ENCODE measurements at regions of chr4 and their contacts with region 1.

Region 1: GRCh38 chr4:183256756-183257385 is 63.2 kb downstream of the CLDN22 start:
- DNase-seq: peak; percentile 54
- H3K27ac ChIP-seq: no peak overlapping the region
- CTCF ChIP-seq: peak; percentile 77

Region 2: DNA sequence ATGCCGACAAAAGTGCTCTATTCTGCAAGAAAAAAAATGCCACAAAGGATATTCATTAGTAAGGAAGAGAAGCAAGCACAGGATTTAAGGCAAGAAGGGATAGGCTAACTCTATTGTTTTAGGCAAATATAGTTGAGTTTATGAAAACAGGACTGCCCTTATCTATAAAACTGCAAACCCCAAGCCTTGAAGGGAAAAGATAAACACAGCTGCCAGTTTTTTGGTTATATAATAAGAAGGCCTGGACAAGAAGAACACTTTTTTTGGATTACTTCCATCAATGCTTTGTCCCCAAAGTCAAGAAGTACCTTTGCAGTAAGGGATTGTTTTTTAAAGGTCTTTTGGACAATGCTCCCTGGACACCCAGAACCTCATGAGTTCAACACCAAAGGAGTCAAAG is 203.2 kb before region 1 on chr4:
- CTCF ChIA-PET with region 1: no interaction called
- POLR2A ChIA-PET with region 1: no interaction called
- DNase-seq: no peak
- H3K27ac ChIP-seq: no peak overlapping the region
- CTCF ChIP-seq: no peak

Region 3: GRCh38 chr4:183074296-183074990 is 182.4 kb before region 1 on chr4:
- CTCF ChIA-PET with region 1: interaction called, 13 read pairs
- POLR2A ChIA-PET with region 1: no interaction called
- DNase-seq: no peak
- H3K27ac ChIP-seq: no peak overlapping the region
- CTCF ChIP-seq: no peak

Measured in RWPE1 (cell line).